H1 (cell line): ENCODE measurements at regions of chr3 and their contacts with region 1.

Region 1: GRCh38 chr3:190224863-190225692 is 97.2 kb downstream of the CLDN1 start:
- DNase-seq: no peak
- H3K4me3 ChIP-seq: no peak overlapping the region
- H3K27ac ChIP-seq: no peak overlapping the region
- H3K4me1 ChIP-seq: no peaks in the 10 kb centered on the region
- H3K27me3 ChIP-seq: no peaks in the 10 kb centered on the region
- CTCF ChIP-seq: peak in 2 of 3 experiments; percentile 39 to 40; a peak in 2 of 4 replicates
- EP300 ChIP-seq: no peak
- POLR2A ChIP-seq: no peak
- RAD21 ChIP-seq: peak; percentile 62 to 63

Region 2: DNA sequence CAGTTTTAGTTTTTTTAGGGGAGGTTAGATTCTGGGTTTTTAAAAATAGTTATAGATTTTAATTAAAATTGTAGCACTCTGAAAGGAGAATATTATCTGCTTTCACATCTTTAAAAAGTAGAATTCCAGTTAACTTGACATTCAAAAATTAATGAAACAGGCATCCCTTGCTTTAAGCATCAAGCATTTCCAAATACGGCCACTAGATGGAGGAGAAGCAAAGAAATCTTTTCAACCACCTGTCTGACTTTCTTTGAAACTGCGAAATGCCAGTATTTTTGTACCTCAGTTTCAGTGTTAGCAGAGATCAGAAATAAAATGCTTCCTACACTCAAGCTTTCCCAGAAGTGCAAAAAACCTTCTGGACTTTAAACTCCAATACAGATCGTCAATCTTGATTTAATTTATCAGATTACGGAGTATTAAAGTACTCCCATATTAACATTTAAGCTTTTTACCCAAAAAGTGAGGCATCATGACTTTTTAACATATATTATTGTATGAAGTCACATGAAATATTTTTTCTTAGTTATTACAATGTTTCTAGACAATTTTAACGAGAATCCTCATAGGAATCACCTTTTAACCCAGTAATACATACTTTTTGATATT is 257.7 kb before region 1 on chr3:
- CTCF ChIA-PET with region 1: interaction called, 20 read pairs
- POLR2A ChIA-PET with region 1: interaction called, 3 read pairs
- DNase-seq: no peak
- H3K4me3 ChIP-seq: no peak overlapping the region
- H3K27ac ChIP-seq: no peak overlapping the region
- H3K4me1 ChIP-seq: peaks cover 0 to under 1% (median 0%) of the 10 kb centered on the region in 4 experiments; a peak in 3 of 7 replicates
- H3K27me3 ChIP-seq: no peaks in the 10 kb centered on the region
- CTCF ChIP-seq: peak in 2 of 3 experiments; percentile 62 to 73; a peak in 2 of 4 replicates
- EP300 ChIP-seq: no peak
- POLR2A ChIP-seq: no peak
- RAD21 ChIP-seq: peak; percentile 89 to 92

Region 3: GRCh38 chr3:190321789-190322603 is 96.9 kb after region 1 on chr3 and contains the start of gene CLDN1:
- CTCF ChIA-PET with region 1: interaction called, 28 read pairs
- POLR2A ChIA-PET with region 1: no interaction called
- DNase-seq: peak; percentile 73 to 95
- H3K4me3 ChIP-seq: peak within 1 kb of the TSS; percentile 76 to 79 (median 78)
- H3K27ac ChIP-seq: no peak within 1 kb of the TSS; the same call in 1 of the 2 replicates
- H3K4me1 ChIP-seq: peaks cover 2 to 13% (median 8%) of the 10 kb centered on the region in 4 experiments; a peak in 5 of 7 replicates
- H3K27me3 ChIP-seq: peaks cover 0 to 7% (median 6%) of the 10 kb centered on the region in 4 experiments; a peak in 5 of 7 replicates
- CTCF ChIP-seq: peak; percentile 74 to 98 (median 84)
- EP300 ChIP-seq: peak in 1 of 2 experiments; percentile 38; a peak in 1 of 3 replicates
- POLR2A ChIP-seq: peak in 1 of 2 experiments; percentile 85; a peak in 2 of 3 replicates
- RAD21 ChIP-seq: peak; percentile 76 to 87
- total RNA-seq, gene CLDN1: 3.0 and 3.1 TPM in 2 replicates

Region 4: GRCh38 chr3:190384241-190384863 is 159.3 kb after region 1 on chr3:
- CTCF ChIA-PET with region 1: interaction called, 13 read pairs
- POLR2A ChIA-PET with region 1: no interaction called
- DNase-seq: no peak
- H3K4me3 ChIP-seq: no peak overlapping the region
- H3K27ac ChIP-seq: no peak overlapping the region
- H3K4me1 ChIP-seq: peaks cover 0 to 3% (median 0%) of the 10 kb centered on the region in 4 experiments; a peak in 1 of 7 replicates
- H3K27me3 ChIP-seq: no peaks in the 10 kb centered on the region
- CTCF ChIP-seq: peak in 2 of 3 experiments; percentile 46 to 48; a peak in 3 of 4 replicates
- EP300 ChIP-seq: no peak
- POLR2A ChIP-seq: no peak
- RAD21 ChIP-seq: peak; percentile 72 to 74

Region 5: DNA sequence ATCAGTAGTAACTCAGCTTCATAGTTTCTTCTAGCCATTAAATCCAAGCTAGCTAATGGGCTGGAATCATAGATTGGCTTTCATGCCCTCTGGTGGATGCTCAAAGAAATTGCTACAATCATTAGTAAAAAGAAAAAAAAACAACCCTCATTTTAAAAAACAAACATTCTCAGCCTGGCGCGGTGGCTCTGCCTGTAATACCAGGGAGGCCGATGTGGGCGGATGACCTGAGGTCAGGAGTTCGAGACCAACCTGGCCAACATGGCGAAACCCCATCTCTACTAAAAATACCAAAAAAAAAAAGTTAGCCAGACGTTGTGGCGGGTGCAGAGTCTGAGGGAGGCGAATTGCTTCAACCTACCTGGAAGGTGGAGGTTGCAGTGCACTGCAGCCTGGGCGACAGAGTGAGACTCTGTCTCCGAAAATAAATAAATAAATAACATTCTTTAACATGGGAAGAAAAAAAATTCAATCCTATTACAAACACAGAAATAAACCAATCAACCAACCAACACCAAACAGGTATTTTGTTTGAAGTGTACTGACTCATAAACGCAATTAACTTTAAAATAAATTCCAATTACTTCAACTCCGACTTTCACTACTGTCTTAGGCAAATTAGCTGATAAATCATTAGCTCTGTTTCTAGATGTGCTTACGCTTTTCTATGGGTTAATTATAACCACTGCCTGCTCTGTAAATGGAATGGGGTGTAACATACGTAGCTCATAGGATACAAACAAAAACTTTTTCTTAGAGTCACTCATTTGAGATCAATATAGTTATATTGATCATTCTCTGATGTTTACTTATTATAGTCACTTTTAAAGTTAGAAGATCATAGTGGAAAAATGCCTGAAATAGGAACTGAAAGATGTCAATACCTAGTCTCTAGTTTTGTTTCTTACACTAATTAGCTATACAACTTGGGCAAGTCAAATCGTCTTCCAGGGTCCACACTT is 199.7 kb after region 1 on chr3:
- CTCF ChIA-PET with region 1: interaction called, 15 read pairs
- POLR2A ChIA-PET with region 1: no interaction called
- DNase-seq: peak; percentile 43 to 79
- H3K4me3 ChIP-seq: no peak overlapping the region
- H3K27ac ChIP-seq: no peak overlapping the region
- H3K4me1 ChIP-seq: no peaks in the 10 kb centered on the region
- H3K27me3 ChIP-seq: no peaks in the 10 kb centered on the region
- CTCF ChIP-seq: peak in 2 of 3 experiments; percentile 54 to 59; a peak in 2 of 4 replicates
- EP300 ChIP-seq: peak in 1 of 2 experiments; percentile 23; a peak in 1 of 3 replicates
- POLR2A ChIP-seq: no peak
- RAD21 ChIP-seq: peak; percentile 66 to 72

Region 6: GRCh38 chr3:190443257-190443656 is 218.2 kb after region 1 on chr3:
- CTCF ChIA-PET with region 1: interaction called, 18 read pairs
- POLR2A ChIA-PET with region 1: no interaction called
- DNase-seq: no peak
- H3K4me3 ChIP-seq: no peak overlapping the region
- H3K27ac ChIP-seq: no peak overlapping the region
- H3K4me1 ChIP-seq: no peaks in the 10 kb centered on the region
- H3K27me3 ChIP-seq: no peaks in the 10 kb centered on the region
- CTCF ChIP-seq: peak in 2 of 3 experiments; percentile 9 to 51; a peak in 2 of 4 replicates
- EP300 ChIP-seq: no peak
- POLR2A ChIP-seq: no peak
- RAD21 ChIP-seq: peak; percentile 38 to 59